ENCODE measurements at regions of chr5 and their contacts with region 1.

Region 1: GRCh38 chr5:157540707-157541446 is 34.7 kb downstream of the ADAM19 start:
- DNase-seq: peak; percentile 88
- H3K4me3 Mint-ChIP-seq: peak overlapping the region; percentile 53
- H3K27ac Mint-ChIP-seq: peak overlapping the region; percentile 97
- H3K4me1 Mint-ChIP-seq: peaks cover 79% of the 10 kb centered on the region
- H3K27me3 Mint-ChIP-seq: no peaks in the 10 kb centered on the region

Region 2: DNA sequence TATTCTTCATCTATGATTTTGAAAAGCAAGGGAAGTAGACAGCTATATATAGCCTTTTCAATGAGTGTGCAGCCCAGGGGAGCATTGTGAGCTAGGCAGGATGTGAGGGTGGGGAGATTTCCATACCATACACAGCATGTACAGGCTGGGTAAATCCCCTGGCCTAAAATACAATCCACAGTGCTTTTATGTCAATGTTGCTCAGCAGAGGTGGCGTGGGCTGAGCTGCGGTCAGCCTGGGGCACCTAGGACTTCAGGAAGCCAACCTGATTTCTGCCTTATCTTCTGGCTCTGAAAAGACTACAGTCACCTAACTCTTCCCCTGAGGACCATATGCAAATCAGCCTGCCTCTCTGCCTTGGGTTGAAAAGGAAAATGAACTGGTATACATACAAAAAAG is 368.5 kb before region 1 on chr5:
- intact Hi-C with region 1: loop called (anchors 5 kb)
- DNase-seq: peak; percentile 95
- H3K4me3 Mint-ChIP-seq: peak overlapping the region; percentile 81
- H3K27ac Mint-ChIP-seq: peak overlapping the region; percentile 96
- H3K4me1 Mint-ChIP-seq: peaks cover 76% of the 10 kb centered on the region
- H3K27me3 Mint-ChIP-seq: no peaks in the 10 kb centered on the region

Region 3: GRCh38 chr5:157464519-157465171 is 76.2 kb before region 1 on chr5:
- intact Hi-C with region 1: loop called (anchors 1 kb)
- DNase-seq: peak; percentile 83
- H3K4me3 Mint-ChIP-seq: peak overlapping the region; percentile 0
- H3K27ac Mint-ChIP-seq: peak overlapping the region; percentile 80
- H3K4me1 Mint-ChIP-seq: peaks cover 40% of the 10 kb centered on the region
- H3K27me3 Mint-ChIP-seq: peaks cover 17% of the 10 kb centered on the region

Region 4: DNA sequence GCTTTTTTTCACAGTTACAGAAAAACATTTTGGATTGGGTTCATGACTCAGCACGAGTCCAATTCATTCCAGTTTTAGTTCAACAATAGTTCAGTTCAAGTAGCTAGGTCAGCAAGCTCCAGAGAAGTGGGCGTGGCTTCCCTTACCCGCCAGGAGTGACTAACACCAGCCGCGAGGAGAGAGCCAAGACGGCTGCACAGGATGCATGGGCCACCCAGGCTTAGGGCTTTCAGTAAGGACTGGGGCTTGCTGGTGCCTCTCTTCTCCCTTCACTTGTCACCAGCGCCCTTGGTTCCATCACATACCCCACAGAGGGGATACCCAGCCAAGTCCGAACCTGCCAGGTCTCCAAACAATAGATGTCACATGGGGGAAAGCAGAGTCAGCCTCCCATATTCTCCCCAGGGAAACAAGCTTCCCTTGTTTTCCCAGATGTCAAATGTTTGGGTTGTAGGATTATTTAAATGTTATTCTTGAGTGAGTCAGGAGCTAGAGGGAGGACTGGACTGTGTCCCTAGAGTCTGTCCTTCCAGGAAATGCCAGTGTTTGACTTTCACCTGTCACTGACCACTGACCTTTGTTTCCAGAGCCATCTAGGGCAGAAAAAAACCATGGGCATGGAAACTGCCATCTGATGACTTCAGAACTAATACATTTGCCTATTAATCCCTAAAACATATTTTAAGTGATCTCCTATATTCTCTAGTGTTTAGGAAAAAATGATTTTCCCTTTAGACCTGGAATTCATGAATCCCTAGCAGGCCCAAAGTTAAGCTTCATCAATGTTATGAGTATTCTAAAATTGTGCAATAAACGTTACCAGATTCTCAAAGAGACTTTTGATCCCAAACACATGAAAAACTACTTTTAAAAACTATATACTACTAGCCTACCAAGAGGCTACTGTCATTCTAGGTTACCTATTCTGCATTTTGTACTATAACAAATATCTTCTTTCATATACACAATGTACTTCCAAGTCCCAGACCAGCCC is 28.9 kb before region 1 on chr5:
- intact Hi-C with region 1: no loop called
- DNase-seq: peak; percentile 68
- H3K4me3 Mint-ChIP-seq: no peak overlapping the region
- H3K27ac Mint-ChIP-seq: peak overlapping the region; percentile 73
- H3K4me1 Mint-ChIP-seq: peaks cover 60% of the 10 kb centered on the region
- H3K27me3 Mint-ChIP-seq: no peaks in the 10 kb centered on the region

Region 5: DNA sequence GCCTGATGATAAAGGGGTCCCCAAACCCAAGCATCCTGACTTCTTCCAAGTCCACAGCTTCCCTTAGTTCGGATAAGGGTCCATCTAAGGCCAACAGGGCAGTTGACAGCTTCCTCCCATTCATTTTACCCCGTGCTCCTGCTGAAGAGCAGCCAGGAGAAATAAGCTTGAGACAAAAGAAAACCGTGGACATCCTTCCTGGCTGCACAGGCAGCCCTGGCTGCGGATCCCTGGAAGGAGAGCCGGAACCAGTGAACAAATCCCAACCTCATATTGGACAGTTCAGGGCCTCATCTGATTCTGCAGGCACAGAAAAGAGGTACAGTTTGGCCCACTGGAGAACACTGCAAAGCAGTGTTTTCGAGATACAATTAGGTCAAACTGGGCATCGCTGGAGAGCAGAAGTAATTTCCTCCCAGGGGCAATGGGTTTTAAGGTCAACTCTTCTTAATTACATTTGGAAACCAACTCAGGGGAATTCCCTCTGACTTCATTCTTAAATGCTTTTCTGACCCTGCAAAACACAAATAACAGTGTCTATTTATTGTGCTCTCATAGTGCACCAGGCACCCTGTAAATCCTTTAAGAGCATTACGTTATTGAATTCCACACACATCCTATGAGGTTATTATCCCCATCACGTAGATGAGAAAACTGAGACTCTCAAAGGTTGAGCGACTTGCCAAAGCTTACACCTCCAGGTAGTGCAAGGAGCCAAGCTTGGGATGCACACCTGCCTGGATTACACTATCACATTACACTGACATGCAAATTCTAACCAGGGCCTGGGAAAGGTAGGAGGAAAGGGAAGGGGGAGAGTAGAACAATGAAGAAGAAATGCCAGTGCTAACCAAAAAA is 13.5 kb after region 1 on chr5:
- intact Hi-C with region 1: no loop called
- DNase-seq: no peak
- H3K4me3 Mint-ChIP-seq: peak overlapping the region; percentile 3
- H3K27ac Mint-ChIP-seq: peak overlapping the region; percentile 69
- H3K4me1 Mint-ChIP-seq: peaks cover 81% of the 10 kb centered on the region
- H3K27me3 Mint-ChIP-seq: no peaks in the 10 kb centered on the region

Region 6: GRCh38 chr5:157571357-157571827 is 30.5 kb after region 1 on chr5:
- intact Hi-C with region 1: loop called (anchors 1 kb)
- DNase-seq: peak; percentile 83
- H3K4me3 Mint-ChIP-seq: peak overlapping the region; percentile 91
- H3K27ac Mint-ChIP-seq: peak overlapping the region; percentile 94
- H3K4me1 Mint-ChIP-seq: peaks cover 62% of the 10 kb centered on the region
- H3K27me3 Mint-ChIP-seq: no peaks in the 10 kb centered on the region

Region 7: DNA sequence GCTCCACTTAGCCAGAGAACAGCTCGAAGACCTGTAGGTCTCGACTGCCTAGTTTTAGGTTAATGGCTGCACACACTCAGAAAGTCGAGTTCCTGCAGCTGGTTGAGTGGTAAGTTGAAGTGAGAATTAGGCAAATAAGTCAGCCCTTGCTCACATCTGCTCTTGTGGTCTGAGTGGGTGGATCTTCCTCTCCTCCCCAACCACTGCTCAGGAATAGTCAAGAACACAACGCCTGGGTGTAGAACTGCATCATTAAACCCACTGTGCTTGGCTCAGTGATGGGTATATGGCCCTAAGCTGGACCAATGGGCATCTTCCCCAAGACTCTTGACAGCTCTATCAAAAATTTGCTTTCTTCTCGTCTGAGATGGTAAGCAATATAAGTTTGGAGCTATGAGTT is 55.6 kb after region 1 on chr5:
- intact Hi-C with region 1: loop called (anchors 1 kb)
- DNase-seq: peak; percentile 86
- H3K4me3 Mint-ChIP-seq: peak overlapping the region; percentile 42
- H3K27ac Mint-ChIP-seq: peak overlapping the region; percentile 79
- H3K4me1 Mint-ChIP-seq: peaks cover 88% of the 10 kb centered on the region
- H3K27me3 Mint-ChIP-seq: no peaks in the 10 kb centered on the region

Region 8: GRCh38 chr5:157731272-157732129 is 190.6 kb after region 1 on chr5 and contains the start of gene THG1L:
- intact Hi-C with region 1: loop called (anchors 1 kb)
- DNase-seq: peak; percentile 100
- H3K4me3 Mint-ChIP-seq: peak within 1 kb of the TSS; percentile 97
- H3K27ac Mint-ChIP-seq: peak within 1 kb of the TSS; percentile 98
- H3K4me1 Mint-ChIP-seq: peaks cover 25% of the 10 kb centered on the region
- H3K27me3 Mint-ChIP-seq: no peaks in the 10 kb centered on the region
- total RNA-seq, gene THG1L: 25.0 and 26.7 TPM in 2 replicates

Region 9: DNA sequence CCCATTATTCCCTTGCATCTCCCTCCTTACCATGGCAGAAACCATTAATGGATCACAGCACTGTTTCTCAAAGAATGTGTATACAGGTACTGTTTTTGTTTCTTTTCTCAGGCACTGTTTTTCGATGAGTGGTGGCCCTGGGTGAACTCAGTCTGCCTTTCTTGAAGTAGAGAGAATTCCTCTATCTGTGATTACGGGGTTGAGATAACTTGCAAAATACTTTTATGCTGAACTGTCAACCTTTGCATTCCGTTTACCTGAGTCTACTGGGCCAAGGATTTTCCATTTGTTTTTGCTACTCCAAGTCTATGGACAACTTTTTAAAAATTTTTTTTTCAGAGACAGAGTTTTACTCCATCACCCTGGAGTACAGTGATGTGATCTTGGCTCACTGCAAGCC is 400.7 kb after region 1 on chr5:
- intact Hi-C with region 1: no loop called
- DNase-seq: no peak
- H3K4me3 Mint-ChIP-seq: no peak overlapping the region
- H3K27ac Mint-ChIP-seq: no peak overlapping the region
- H3K4me1 Mint-ChIP-seq: no peaks in the 10 kb centered on the region
- H3K27me3 Mint-ChIP-seq: peaks cover 6% of the 10 kb centered on the region

Measured in activated CD4-positive, alpha-beta T cell treated with anti-CD3 and anti-CD28 coated beads, Interleukin-2, amount 10 ng/mL, durations not matched to agents 24 days and 14 days (primary cell).